Cardiac septum (tissue), 1 donor: ENCODE measurements at regions of chr12 and their contacts with region 1.

Region 1: DNA sequence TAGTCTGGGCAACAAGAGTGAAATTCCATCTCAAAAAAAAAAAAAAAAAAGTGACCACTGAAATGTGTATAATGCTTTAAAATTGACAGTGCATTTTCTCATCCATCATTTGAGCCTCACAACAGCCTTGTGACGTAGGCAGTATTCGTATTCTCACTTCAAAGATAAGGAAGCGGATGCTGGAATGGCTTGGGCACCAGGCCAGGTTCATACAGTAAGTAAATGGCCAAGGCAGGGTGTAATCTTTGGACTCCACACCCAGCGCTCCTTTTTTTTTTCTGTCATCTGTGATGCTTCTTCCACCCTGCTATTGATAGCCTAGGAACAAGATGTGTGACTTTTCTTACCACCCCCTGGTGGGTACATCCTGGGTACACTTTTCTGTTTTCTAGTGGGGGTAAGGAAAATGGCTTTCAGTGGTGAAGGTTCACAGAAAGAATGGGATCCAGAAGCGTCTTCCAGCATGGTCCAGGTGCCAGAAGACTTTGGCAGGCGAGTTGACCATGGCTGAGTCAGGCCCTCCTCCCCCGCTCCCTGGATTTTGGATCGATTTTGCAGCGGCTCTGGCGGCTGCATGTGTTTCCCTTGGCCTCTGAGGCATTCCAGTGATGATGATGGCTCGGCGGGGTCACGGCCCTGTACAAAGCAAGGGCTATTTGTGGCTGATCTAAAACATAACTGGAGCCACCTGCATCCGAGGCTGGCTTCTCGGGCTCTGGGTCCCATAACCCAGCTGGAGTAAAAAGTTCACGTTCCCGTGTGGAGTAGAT is 110.6 kb downstream of the CACNA1C start:
- DNase-seq: peak; percentile 92

Region 2: DNA sequence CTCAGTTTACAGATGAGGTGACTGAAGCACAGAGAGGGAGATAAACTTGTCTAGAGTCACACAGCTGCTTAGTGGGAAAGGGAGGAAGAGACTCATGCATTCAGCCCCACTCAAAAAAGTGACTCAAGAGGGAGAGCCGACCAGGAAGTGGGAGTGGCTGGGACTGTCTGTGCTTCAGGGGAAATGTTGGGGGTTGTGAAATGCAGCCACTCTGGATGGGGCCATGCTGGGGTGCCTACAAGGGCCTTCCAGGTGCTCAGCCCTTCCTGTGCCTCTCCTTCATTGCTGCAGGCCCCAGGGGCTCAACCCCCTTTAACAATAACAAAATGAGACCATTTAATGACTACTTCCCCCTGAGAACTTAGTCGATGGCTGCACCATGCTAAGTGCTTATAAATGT is 68.8 kb before region 1 on chr12:
- intact Hi-C with region 1: no loop called
- DNase-seq: no peak

Region 3: DNA sequence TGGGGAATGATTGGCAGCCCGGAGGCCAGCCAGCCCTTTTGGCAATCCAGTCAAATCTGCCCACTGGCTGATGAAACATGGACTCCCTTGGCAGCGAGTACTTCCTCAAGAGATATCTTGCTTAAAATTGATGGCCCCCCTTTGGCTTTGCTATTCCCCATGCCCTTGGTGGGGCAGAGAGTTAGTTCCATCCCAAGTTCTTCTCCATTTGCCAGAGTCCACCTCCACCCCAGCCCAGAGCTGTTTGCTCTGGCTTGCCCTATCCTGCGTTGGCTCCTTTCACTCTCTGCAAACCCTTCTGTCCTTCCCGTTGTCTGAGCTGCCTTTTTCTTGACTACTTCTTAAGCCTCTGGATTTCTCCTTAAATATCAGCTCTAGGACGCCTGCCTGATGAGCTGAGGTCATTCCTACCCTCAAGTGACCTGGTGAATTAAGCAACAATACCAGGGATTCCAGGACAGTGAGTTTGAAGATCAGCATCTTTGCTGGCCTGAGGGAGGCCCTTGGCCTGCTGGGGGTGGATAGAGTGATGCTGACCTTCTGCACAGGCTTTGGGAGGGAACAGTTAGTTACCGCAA is 101.4 kb after region 1 on chr12:
- intact Hi-C with region 1: loop called (anchors 5 kb)
- DNase-seq: peak; percentile 38